ENCODE measurements at regions of chr10 and their contacts with region 1.

Region 1: GRCh38 chr10:24556750-24557742 is 166.6 kb downstream of the ARHGAP21 start:
- DNase-seq: no peak
- ATAC-seq: peak in 1 of 2 donors; percentile 45
- H3K4me3 ChIP-seq: no peak overlapping the region
- H3K27ac ChIP-seq: no peak overlapping the region
- H3K4me1 ChIP-seq: peaks cover 24 to 32% of the 10 kb centered on the region in 2 donors
- H3K27me3 ChIP-seq: no peaks in the 10 kb centered on the region
- CTCF ChIP-seq: peak; percentile 58 to 73 (median 63)
- POLR2A ChIP-seq: no peak

Region 2: DNA sequence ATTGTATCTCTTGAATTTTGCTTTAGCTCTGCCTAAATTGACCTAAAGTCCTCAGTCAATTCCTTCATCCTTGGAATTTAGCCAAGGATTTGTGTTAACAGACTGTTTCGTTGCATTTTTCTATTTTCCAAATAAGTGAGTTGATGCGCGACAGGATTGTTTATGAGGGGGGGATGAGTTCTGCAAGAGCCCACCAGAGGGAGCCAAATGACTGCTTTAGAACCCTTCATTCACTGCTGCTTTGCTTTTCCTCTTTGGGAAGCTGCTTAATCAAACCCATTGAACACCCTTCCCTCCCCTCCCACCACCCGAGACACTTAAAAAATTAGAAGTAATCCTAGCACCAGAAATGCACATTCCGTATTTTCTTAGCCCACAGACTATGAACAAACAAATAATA is 1398.7 kb before region 1 on chr10:
- in situ Hi-C with region 1: loop called in 1 of 4 experiments (anchors 25 kb)
- intact Hi-C with region 1: no loop called
- DNase-seq: no peak
- ATAC-seq: peak; percentile 50 to 60
- H3K4me3 ChIP-seq: no peak overlapping the region
- H3K27ac ChIP-seq: no peak overlapping the region
- H3K4me1 ChIP-seq: no peaks in the 10 kb centered on the region
- H3K27me3 ChIP-seq: peaks cover 0 to 5% (median 0%) of the 10 kb centered on the region in 3 donors
- CTCF ChIP-seq: peak; percentile 31 to 77 (median 61)
- POLR2A ChIP-seq: no peak

Region 3: GRCh38 chr10:23525406-23525805 is 1031.6 kb before region 1 on chr10:
- in situ Hi-C with region 1: loop called in 1 of 4 experiments (anchors 25 kb)
- intact Hi-C with region 1: no loop called
- DNase-seq: peak in 1 of 2 donors; percentile 19
- ATAC-seq: peak; percentile 93 to 97
- H3K4me3 ChIP-seq: no peak overlapping the region
- H3K27ac ChIP-seq: no peak overlapping the region
- H3K4me1 ChIP-seq: no peaks in the 10 kb centered on the region
- H3K27me3 ChIP-seq: no peaks in the 10 kb centered on the region
- CTCF ChIP-seq: peak; percentile 41 to 68 (median 61)
- POLR2A ChIP-seq: no peak